Psoas muscle (tissue), 8 donors: ENCODE measurements at regions of chr2 and their contacts with region 1.

Region 1: DNA sequence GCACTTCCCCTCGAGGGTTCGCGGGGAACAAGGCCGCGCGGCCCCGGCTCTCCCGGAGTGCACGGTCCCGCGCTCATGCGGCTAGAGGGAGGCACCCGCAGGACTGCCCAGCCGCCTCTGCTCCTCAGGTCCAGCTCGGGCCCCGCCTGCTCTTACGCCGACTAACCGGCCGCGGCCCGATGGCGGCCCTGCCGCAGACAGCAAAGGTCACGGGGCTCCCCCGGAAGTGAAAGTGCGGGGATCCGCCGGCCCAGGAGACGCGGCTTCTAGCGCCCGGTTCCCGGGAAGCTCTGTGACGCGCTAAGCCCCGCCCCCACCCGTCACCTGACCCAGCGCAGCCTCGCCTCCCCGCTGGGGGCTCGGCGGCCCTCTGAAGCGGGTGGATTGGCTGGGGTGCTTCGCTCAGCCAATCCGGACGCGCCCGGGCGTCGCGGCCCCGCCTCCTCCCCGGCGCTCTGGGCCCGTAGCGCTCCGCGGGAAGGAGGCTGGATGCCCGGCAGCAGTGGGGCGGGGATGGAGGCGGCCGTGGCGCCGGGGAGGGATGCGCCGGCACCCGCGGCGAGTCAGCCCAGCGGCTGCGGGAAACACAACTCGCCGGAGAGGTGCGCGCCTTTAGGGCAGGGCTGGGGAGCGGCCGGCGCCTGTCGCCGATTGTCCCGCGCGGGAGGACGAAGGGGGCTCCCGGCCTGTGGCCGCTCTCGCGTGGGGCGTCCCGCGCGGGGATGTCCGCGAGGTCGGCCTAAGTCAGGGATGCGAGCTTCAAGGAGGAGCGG is at the start of gene SCLY:
- DNase-seq: peak; percentile 98 to 99
- ATAC-seq: peak; percentile 99
- H3K4me3 ChIP-seq: peak within 1 kb of the TSS; percentile 99
- H3K27ac ChIP-seq: peak within 1 kb of the TSS; percentile 95
- H3K4me1 ChIP-seq: peaks cover 13% of the 10 kb centered on the region
- H3K27me3 ChIP-seq: no peaks in the 10 kb centered on the region
- CTCF ChIP-seq: no peak
- total RNA-seq, gene SCLY: 4.8 to 10.1 (median 7.4) TPM

Region 2: GRCh38 chr2:237465515-237466218 is 595.1 kb before region 1 on chr2:
- intact Hi-C with region 1: no loop called
- DNase-seq: no peak
- ATAC-seq: peak in 2 of 4 donors; percentile 42 to 61
- H3K4me3 ChIP-seq: no peak overlapping the region
- H3K27ac ChIP-seq: no peak overlapping the region
- H3K4me1 ChIP-seq: no peaks in the 10 kb centered on the region
- H3K27me3 ChIP-seq: no peaks in the 10 kb centered on the region
- CTCF ChIP-seq: no peak

Region 3: GRCh38 chr2:237818066-237818473 is 242.7 kb before region 1 on chr2:
- intact Hi-C with region 1: no loop called
- DNase-seq: no peak
- ATAC-seq: no peak
- H3K4me3 ChIP-seq: no peak overlapping the region
- H3K27ac ChIP-seq: no peak overlapping the region
- H3K4me1 ChIP-seq: no peaks in the 10 kb centered on the region
- H3K27me3 ChIP-seq: no peaks in the 10 kb centered on the region
- CTCF ChIP-seq: no peak

Region 4: GRCh38 chr2:238133499-238134392 is 73.0 kb after region 1 on chr2:
- intact Hi-C with region 1: loop called in 1 of 2 experiments (anchors 2 kb)
- DNase-seq: peak; percentile 18 to 62
- ATAC-seq: no peak
- H3K4me3 ChIP-seq: no peak overlapping the region
- H3K27ac ChIP-seq: no peak overlapping the region
- H3K4me1 ChIP-seq: peaks cover 28% of the 10 kb centered on the region
- H3K27me3 ChIP-seq: no peaks in the 10 kb centered on the region
- CTCF ChIP-seq: no peak